ENCODE measurements at regions of chr11 and their contacts with region 1.

Region 1: DNA sequence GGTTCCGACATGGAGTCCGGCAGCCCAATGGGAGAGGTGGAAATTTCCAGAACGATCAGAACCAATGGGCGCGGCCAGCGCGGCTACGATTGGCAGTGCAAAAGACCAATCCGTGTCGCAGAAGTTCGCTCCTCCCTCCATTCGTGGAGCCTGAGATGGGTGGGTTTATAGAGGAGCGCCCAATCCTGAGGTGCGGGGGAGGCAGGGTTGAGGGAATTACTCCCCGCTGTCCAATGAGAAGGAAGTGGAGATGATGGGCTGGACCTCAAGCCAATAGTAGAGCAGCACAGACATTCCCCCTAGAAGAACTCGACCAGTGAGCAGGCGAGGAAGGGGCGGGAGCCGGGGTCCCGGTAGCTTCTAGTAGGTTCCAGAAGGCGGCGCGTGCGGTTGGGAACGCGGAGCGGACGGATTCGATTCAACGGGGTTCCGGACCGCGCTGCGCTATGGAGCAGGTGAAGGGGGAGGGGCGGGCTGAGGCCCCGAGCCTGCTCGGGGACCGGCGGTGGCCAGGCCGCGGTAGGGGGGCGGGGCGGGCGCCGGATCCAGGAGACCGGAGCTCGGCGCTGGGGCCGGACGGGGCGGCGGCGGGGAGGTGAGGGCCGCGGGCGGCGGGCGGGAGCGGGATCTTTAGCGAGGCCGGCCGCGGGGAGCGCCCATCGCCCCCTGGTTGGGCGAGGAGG is at the start of gene STIP1:
- DNase-seq: peak; percentile 99
- H3K4me3 Mint-ChIP-seq: no peak within 1 kb of the TSS
- H3K27ac Mint-ChIP-seq: peak within 1 kb of the TSS; percentile 94
- H3K4me1 Mint-ChIP-seq: peaks cover 54% of the 10 kb centered on the region
- H3K27me3 Mint-ChIP-seq: no peaks in the 10 kb centered on the region
- total RNA-seq, gene STIP1: 264 to 272 TPM

Region 2: GRCh38 chr11:63974259-63975143 is 211.5 kb before region 1 on chr11 and contains the start of gene COX8A:
- CTCF ChIA-PET with region 1: interaction called, 3 read pairs
- intact Hi-C with region 1: loop called (anchors 1 kb)
- DNase-seq: peak; percentile 99
- H3K4me3 Mint-ChIP-seq: peak within 1 kb of the TSS; percentile 95
- H3K27ac Mint-ChIP-seq: peak within 1 kb of the TSS; percentile 98
- H3K4me1 Mint-ChIP-seq: peaks cover 27% of the 10 kb centered on the region
- H3K27me3 Mint-ChIP-seq: no peaks in the 10 kb centered on the region
- total RNA-seq, gene COX8A: 669 to 675 TPM

Region 3: GRCh38 chr11:64225612-64226506 is 39.9 kb after region 1 on chr11 and contains the starts of genes NUDT22 and TRPT1:
- CTCF ChIA-PET with region 1: no interaction called
- intact Hi-C with region 1: loop called (anchors 1 kb)
- DNase-seq: peak; percentile 94
- H3K4me3 Mint-ChIP-seq: peak within 1 kb of the TSS; percentile 87
- H3K27ac Mint-ChIP-seq: peak within 1 kb of the TSS; percentile 90
- H3K4me1 Mint-ChIP-seq: peaks cover 34% of the 10 kb centered on the region
- H3K27me3 Mint-ChIP-seq: no peaks in the 10 kb centered on the region
- total RNA-seq, gene NUDT22: 51.4 to 51.9 TPM
- total RNA-seq, gene TRPT1: 18.2 to 18.3 TPM

Region 4: DNA sequence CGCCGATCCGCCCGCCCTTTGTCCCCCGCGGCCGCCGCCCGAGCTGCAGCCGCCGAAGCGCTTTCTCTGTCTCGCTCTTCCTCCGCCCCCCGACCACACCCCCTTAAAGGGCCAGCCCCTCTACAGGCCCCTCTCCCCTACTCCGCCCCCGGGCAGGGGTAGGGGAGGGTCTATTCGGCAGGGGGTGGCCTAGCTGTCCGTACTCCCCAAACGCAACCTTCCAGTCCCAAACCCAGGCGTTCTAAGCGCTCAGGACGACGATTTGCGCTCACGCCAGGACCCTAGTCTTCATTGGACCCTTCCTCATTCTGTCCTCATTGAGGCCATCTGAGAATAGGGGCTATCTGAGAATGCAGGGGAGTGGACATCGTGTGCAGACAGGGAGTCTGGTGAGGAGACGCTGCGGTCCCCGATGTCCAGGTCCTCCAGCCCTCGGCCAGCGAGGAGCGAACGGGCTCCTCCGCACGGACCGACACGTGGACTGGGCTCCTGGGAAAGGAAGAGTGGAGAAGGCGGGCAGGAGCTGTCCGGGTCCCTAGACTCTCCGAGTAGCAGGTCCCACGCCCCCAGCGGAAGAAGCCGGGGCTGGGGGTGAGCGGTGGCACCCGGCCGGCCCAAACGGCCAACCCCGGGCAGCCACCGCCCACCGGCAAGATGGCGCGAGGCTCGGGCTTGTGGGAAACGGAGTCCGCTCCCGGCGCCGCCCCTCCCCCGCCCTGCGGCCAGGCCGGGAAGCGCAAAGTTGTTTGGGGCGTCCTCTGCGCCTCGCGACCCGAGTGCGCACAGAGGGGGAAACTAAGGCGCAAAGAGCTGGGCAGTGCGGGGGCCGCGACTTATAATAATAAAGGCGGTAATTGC is 61.1 kb after region 1 on chr11 and contains the start of gene PPP1R14B:
- CTCF ChIA-PET with region 1: interaction called, 3 read pairs
- intact Hi-C with region 1: loop called (anchors 1 kb)
- DNase-seq: peak; percentile 80
- H3K4me3 Mint-ChIP-seq: peak within 1 kb of the TSS; percentile 95
- H3K27ac Mint-ChIP-seq: peak within 1 kb of the TSS; percentile 91
- H3K4me1 Mint-ChIP-seq: peaks cover 29% of the 10 kb centered on the region
- H3K27me3 Mint-ChIP-seq: no peaks in the 10 kb centered on the region
- total RNA-seq, gene PPP1R14B: 216 to 227 TPM

Region 5: GRCh38 chr11:64341851-64342791 is 156.2 kb after region 1 on chr11:
- CTCF ChIA-PET with region 1: no interaction called
- intact Hi-C with region 1: no loop called
- DNase-seq: peak; percentile 95
- H3K4me3 Mint-ChIP-seq: peak overlapping the region; percentile 18
- H3K27ac Mint-ChIP-seq: no peak overlapping the region
- H3K4me1 Mint-ChIP-seq: peaks cover 34% of the 10 kb centered on the region
- H3K27me3 Mint-ChIP-seq: no peaks in the 10 kb centered on the region

Region 6: DNA sequence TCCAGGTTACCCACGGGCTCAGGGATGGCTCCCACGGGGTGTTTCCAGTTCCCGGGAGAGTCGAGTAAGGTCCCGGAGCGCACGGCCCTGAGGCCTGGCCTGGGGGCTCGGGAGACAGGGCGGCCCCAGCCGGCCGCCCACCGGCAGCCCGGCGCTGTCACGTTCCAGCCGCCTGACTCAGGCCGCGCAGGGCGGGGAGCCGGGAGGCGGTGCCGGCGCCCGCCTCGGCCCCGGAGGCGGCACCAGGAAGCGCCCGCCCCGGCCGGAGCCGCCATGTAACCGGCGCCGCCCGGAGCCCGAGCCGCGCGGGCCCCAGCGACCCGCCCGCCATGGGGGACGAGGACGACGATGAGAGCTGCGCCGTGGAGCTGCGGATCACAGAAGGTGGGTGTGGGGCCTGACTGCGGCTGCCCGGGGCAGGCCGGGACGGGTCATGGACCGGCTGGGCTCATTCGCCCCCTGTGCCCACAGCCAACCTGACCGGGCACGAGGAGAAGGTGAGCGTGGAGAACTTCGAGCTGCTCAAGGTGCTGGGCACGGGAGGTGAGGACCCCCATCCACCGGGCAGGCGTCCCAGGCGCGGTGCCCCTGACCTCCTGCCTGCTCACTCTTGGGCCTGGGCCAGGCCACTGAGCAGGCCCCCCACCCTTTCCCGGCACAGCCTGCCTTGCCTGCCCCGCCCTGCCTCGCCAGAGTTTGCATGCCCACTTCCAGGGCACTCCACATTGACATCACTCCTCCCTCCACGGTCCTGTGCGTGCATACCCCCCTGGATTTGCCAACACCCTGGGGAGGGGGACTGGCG is 173.2 kb after region 1 on chr11 and contains the start of gene RPS6KA4:
- CTCF ChIA-PET with region 1: no interaction called
- intact Hi-C with region 1: loop called (anchors 5 kb)
- DNase-seq: peak; percentile 60
- H3K4me3 Mint-ChIP-seq: peak within 1 kb of the TSS; percentile 91
- H3K27ac Mint-ChIP-seq: peak within 1 kb of the TSS; percentile 34
- H3K4me1 Mint-ChIP-seq: peaks cover 41% of the 10 kb centered on the region
- H3K27me3 Mint-ChIP-seq: no peaks in the 10 kb centered on the region
- total RNA-seq, gene RPS6KA4: 19.1 to 21.3 TPM

Measured in activated naive CD4-positive, alpha-beta T cell treated with anti-CD3 and anti-CD28 coated beads for 36 hours (primary cell).